ENCODE measurements at regions of chr16 and their contacts with region 1.

Region 1: DNA sequence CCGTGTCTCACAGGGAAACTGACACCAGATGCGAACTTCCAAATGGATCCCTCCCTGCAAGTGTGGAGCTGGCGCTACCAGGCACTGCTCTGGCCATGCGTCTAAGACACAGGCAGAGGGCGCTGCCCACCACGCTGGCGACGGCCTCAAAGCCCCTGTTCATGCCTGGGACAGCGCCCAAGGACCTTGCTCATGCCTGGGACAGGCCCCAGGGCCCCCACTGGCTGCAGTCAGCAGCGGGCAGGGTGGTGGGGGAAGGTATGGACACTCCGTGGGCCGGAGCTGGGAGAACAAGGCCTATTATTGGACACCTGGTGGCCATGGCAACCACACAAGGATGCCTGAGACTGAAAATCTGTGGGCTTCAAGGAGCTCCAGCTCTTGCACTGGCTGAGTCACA is 8.8 kb downstream of the ZG16B start:
- DNase-seq: peak; percentile 34 to 80 (median 63)
- ATAC-seq: peak; percentile 76
- H3K4me3 ChIP-seq: no peak overlapping the region
- H3K4me3 Mint-ChIP-seq: no peak overlapping the region
- H3K27ac ChIP-seq: no peak overlapping the region
- H3K27ac Mint-ChIP-seq: peak overlapping the region; percentile 64
- H3K4me1 ChIP-seq: peaks cover 49% of the 10 kb centered on the region
- H3K4me1 Mint-ChIP-seq: peaks cover 35% of the 10 kb centered on the region
- H3K27me3 ChIP-seq: peaks cover 0 to 4% of the 10 kb centered on the region in 2 experiments
- H3K27me3 Mint-ChIP-seq: peaks cover 10% of the 10 kb centered on the region
- CTCF ChIP-seq: peak; percentile 63

Region 2: GRCh38 chr16:2784951-2785635 is 53.8 kb before region 1 on chr16:
- CTCF ChIA-PET with region 1: no interaction called
- POLR2A ChIA-PET with region 1: no interaction called
- intact Hi-C with region 1: no loop called
- DNase-seq: peak in 6 of 9 experiments; percentile 26 to 72 (median 52)
- ATAC-seq: peak; percentile 78
- H3K4me3 ChIP-seq: peak overlapping the region; percentile 46 to 58
- H3K4me3 Mint-ChIP-seq: peak overlapping the region; percentile 86
- H3K27ac ChIP-seq: no peak overlapping the region
- H3K27ac Mint-ChIP-seq: peak overlapping the region; percentile 18
- H3K4me1 ChIP-seq: peaks cover 16% of the 10 kb centered on the region
- H3K4me1 Mint-ChIP-seq: peaks cover 7% of the 10 kb centered on the region
- H3K27me3 ChIP-seq: peaks cover 0 to 7% of the 10 kb centered on the region in 2 experiments
- H3K27me3 Mint-ChIP-seq: peaks cover 10% of the 10 kb centered on the region
- CTCF ChIP-seq: no peak

Region 3: DNA sequence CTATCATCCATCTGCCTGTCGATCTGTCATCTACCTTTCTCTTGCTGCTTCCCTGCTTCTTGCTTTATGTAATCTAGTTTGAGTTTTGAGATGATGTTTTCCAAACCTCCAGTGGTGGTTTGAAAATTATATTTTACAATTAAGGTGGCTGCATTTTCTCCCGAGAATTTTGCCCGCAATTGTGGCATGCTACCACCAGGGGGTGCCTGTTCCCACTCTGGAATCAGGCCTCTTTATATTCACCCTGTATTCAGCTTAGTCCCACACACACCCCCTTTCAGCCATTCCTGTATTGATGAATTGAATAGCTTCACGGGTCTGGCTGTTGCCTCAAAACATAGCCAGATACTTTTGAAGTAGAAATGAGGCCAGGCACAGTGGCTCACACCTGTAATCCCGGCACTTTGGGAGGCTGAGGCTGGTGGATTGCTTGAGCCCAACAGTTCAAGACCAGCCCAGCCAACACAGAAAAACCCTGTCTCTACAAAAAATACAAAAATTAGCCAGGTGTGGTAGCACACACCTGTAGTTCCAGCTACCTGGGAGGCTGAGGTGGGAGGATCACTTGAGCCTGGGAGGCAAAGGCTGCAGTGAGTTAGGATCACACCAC is 15.9 kb after region 1 on chr16:
- CTCF ChIA-PET with region 1: interaction called, 19 read pairs
- POLR2A ChIA-PET with region 1: no interaction called
- intact Hi-C with region 1: no loop called
- DNase-seq: no peak
- ATAC-seq: no peak
- H3K4me3 ChIP-seq: no peak overlapping the region
- H3K4me3 Mint-ChIP-seq: no peak overlapping the region
- H3K27ac ChIP-seq: no peak overlapping the region
- H3K27ac Mint-ChIP-seq: no peak overlapping the region
- H3K4me1 ChIP-seq: peaks cover 18% of the 10 kb centered on the region
- H3K4me1 Mint-ChIP-seq: peaks cover 4% of the 10 kb centered on the region
- H3K27me3 ChIP-seq: peaks cover 3% of the 10 kb centered on the region in 2 experiments
- H3K27me3 Mint-ChIP-seq: peaks cover 5% of the 10 kb centered on the region
- CTCF ChIP-seq: no peak

Region 4: DNA sequence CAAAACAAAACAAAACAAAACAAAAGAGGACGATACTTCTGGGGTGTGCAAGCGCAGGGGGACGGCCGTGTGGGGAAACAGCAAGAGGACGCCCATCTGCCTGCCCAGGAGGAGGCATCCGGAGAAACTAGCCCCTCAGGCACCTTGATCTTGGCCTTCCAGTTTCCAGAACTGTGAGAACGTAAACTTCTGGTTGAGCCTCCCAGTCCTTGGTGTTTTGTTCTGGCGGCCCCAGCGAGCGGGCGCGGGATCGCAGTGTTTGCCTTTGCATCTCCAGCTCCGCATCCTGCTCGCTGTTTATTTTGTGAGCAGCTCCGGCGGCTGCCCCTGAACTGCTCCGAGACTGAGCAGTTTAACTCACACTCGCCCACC is 206.4 kb after region 1 on chr16:
- CTCF ChIA-PET with region 1: no interaction called
- POLR2A ChIA-PET with region 1: no interaction called
- intact Hi-C with region 1: no loop called
- DNase-seq: peak in 5 of 9 experiments; percentile 38 to 56 (median 49)
- ATAC-seq: peak; percentile 69
- H3K4me3 ChIP-seq: peak overlapping the region; percentile 31 to 55
- H3K4me3 Mint-ChIP-seq: peak overlapping the region; percentile 80
- H3K27ac ChIP-seq: no peak overlapping the region
- H3K27ac Mint-ChIP-seq: peak overlapping the region; percentile 22
- H3K4me1 ChIP-seq: peaks cover 20% of the 10 kb centered on the region
- H3K4me1 Mint-ChIP-seq: peaks cover 20% of the 10 kb centered on the region
- H3K27me3 ChIP-seq: peaks cover 26 to 46% of the 10 kb centered on the region in 2 experiments
- H3K27me3 Mint-ChIP-seq: peaks cover 26% of the 10 kb centered on the region
- CTCF ChIP-seq: no peak

Region 5: DNA sequence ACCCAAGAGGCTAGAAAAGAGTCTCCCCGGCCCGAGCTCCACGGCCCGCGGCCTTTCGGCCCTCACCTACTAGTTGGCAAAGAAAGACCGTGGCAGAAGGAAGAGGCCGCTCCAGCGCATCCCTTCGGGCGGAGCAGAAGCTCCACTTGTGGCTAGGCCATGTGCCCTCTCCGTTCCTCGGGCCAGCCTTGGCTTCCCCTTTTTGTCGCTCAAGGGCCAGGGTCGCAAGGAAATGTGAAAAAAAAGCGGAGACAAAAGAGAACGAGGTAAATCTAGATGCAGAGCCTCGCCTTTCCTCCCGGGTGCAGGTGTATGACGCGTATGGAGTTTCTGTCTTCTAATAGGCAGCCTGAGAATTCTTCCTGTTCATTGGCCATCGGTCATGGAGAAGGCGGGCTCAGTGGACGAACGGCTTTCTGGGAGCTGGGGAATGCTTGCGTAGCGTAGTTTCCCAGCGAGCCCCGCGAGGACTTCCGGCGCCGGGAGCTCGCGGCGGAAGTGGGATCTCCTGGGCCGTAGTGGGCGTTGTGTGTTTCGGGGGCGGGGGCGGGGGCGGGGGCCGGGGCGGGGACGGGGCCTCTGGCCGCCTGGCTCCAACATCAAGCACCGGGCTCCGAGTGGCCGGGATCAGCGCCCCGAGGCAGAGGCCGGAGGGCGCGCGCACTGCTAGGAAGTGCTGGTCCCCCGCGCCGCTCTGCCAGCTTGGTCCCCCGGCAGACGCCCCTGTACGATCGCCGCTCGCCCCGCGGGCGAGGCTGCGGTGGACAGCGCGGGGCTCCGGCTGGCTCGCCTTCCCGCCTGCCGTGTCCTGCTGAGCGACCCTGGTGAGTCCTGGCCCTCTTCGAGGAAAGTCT is 295.9 kb after region 1 on chr16 and contains the start of gene ZNF213:
- CTCF ChIA-PET with region 1: no interaction called
- POLR2A ChIA-PET with region 1: no interaction called
- intact Hi-C with region 1: no loop called
- DNase-seq: peak; percentile 84 to 99 (median 92)
- ATAC-seq: peak; percentile 99
- H3K4me3 ChIP-seq: peak within 1 kb of the TSS; percentile 89 to 93
- H3K4me3 Mint-ChIP-seq: peak within 1 kb of the TSS; percentile 95
- H3K27ac ChIP-seq: peak within 1 kb of the TSS; percentile 94 to 95
- H3K27ac Mint-ChIP-seq: peak within 1 kb of the TSS; percentile 99
- H3K4me1 ChIP-seq: peaks cover 15% of the 10 kb centered on the region
- H3K4me1 Mint-ChIP-seq: peaks cover 29% of the 10 kb centered on the region
- H3K27me3 ChIP-seq: no peaks in the 10 kb centered on the region
- H3K27me3 Mint-ChIP-seq: no peaks in the 10 kb centered on the region
- CTCF ChIP-seq: peak; percentile 5
- total RNA-seq, gene ZNF213: 1.8 to 2.2 TPM

Measured in CD8-positive, alpha-beta T cell (primary cell).